Left ventricle myocardium superior (tissue), 1 donor: ENCODE measurements at regions of chr3 and their contacts with region 1.

Region 1: DNA sequence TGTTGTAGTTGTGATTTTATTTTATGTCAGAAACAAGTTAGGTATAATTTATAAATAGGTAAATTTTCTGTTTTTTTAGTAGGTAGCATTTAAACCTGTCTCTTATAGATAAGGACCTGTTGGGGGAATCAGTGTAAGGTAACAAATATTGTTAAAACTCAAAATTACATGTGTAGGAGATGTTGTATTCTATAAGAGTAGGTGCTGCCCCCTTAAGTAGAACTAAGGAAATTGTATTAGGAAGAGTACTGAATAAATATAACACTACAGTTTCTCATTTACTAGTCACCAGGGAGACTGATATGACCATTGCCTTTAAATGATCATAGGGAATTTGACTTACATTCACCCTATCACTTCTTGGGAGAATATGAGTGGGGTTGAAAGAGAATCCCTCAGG is 31.2 kb downstream of the SLC25A36 start:
- DNase-seq: no peak
- ATAC-seq: peak; percentile 45

Region 2: DNA sequence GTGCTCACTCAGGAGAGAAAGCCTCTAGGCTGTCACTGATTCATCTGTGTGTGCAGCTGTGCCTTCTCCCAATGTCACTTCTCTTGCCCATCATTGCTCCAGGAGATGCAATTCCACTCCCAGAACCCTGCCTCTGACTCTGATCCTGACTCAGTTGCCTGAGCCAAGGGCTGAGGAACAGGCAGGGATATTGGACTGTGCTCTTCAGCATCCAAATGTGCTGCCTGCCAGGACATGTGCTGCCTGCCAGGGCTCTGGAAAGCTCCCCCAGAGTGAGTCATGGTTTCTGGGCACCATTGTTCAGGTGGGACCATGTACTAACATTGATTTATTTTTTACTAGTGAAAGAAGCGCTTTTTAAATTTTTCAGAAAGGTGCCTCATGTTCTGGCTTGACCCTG is 223.9 kb before region 1 on chr3:
- intact Hi-C with region 1: no loop called
- DNase-seq: no peak
- ATAC-seq: no peak

Region 3: DNA sequence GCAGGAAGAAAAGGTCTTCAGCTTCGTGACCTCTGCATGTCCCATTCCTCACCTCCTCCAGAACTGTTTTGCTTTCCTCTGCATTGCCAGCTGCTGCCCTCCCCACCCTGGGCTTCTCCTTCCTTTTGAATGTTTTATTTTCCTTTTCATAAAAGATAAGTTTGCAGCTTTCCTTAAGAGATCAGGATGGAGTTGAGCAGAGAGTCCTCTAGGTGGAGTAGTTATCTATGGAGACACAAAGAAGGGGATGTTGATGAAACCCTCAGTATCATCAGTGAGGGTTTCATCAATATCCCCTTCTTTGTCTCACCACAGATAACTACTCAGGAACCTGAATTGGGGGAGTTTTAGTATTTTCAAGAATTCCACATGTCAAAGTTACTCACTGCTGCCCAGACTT is 50.2 kb before region 1 on chr3:
- intact Hi-C with region 1: loop called (anchors 10 kb)
- DNase-seq: no peak
- ATAC-seq: no peak